ENCODE measurements at regions of chr7 and their contacts with region 1.

Region 1: DNA sequence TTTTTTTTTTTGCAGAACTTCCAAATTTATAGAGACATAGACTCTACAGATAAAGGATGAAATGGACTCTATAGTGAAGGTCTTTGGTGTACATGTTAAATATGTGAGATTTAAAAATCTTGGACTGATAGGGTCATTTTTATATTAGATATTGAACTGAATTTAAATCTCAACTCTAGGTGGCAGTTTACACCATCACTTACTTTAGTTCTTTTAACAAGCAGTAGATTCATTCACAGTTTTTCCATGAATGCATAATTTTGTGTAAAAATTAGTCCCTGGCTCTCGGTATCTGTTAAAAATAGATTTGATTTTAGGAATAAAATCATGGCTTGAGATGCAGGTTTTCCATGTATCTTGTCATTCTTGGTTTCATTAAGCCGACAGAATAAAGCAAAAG is 31.1 kb upstream of the SNX13 start:
- DNase-seq: no peak

Region 2: DNA sequence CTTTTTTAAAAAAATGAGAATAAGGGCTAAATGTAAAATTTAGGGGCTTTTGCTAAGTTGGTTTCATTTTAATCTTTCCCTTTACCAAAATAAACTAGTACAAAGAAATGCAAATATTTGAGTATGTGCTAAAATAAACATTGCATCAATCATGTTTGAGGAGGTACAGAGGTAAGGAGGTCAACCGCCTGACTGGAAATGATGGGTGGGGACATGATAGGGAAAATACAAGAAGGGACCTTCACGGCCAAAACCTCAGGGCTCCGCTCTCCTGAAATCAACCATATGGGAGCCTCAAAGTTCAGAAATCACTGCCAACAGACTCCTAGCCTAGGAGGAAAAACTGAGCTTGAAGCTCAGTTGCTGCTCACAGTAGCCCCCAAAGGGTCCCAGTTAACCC is 465.3 kb before region 1 on chr7:
- intact Hi-C with region 1: no loop called
- DNase-seq: no peak

Region 3: GRCh38 chr7:18019573-18019972 is 48.2 kb after region 1 on chr7:
- intact Hi-C with region 1: no loop called
- DNase-seq: no peak

Region 4: GRCh38 chr7:18345641-18346234 is 374.3 kb after region 1 on chr7:
- intact Hi-C with region 1: loop called (anchors 10 kb)
- DNase-seq: no peak